ENCODE measurements at regions of chr1 and their contacts with region 1.

Region 1: GRCh38 chr1:225977937-225978748 is 21.0 kb downstream of the SDE2 start:
- DNase-seq: peak in 1 of 4 experiments; percentile 35
- ATAC-seq: peak; percentile 19
- H3K4me3 ChIP-seq: no peak overlapping the region
- H3K27ac ChIP-seq: no peak overlapping the region
- H3K4me1 ChIP-seq: peaks cover 1 to 7% of the 10 kb centered on the region in 2 experiments; a peak in 4 of 5 replicates
- H3K27me3 ChIP-seq: no peaks in the 10 kb centered on the region
- CTCF ChIP-seq: peak in 2 of 3 experiments; percentile 25 to 33; a peak in 1 of 6 replicates
- EP300 ChIP-seq: no peak
- POLR2A ChIP-seq: 0 out of 2 replicates have a peak, but pooled peaks have one; percentile 15
- RAD21 ChIP-seq: peak in 1 of 2 experiments; percentile 39; a peak in 2 of 4 replicates

Region 2: GRCh38 chr1:225318706-225319575 is 659.2 kb before region 1 on chr1:
- CTCF ChIA-PET with region 1: no interaction called
- POLR2A ChIA-PET with region 1: no interaction called
- in situ Hi-C with region 1: no loop called
- intact Hi-C with region 1: loop called (anchors 2 kb)
- DNase-seq: peak; percentile 21 to 60 (median 43)
- ATAC-seq: peak; percentile 98
- H3K4me3 ChIP-seq: no peak overlapping the region
- H3K27ac ChIP-seq: no peak overlapping the region
- H3K4me1 ChIP-seq: no peaks in the 10 kb centered on the region
- H3K27me3 ChIP-seq: peaks cover 3 to 10% of the 10 kb centered on the region in 2 experiments; a peak in 1 of 5 replicates
- CTCF ChIP-seq: peak; percentile 71 to 84 (median 79)
- EP300 ChIP-seq: no peak
- POLR2A ChIP-seq: no peak
- RAD21 ChIP-seq: peak; percentile 55 to 80

Region 3: GRCh38 chr1:225554216-225554812 is 423.8 kb before region 1 on chr1:
- CTCF ChIA-PET with region 1: interaction called, 9 read pairs
- POLR2A ChIA-PET with region 1: no interaction called
- in situ Hi-C with region 1: no loop called
- intact Hi-C with region 1: loop called (anchors 5 kb)
- DNase-seq: peak; percentile 22 to 34 (median 30)
- ATAC-seq: peak; percentile 73; the same call in 2 of the 3 replicates
- H3K4me3 ChIP-seq: no peak overlapping the region
- H3K27ac ChIP-seq: no peak overlapping the region
- H3K4me1 ChIP-seq: no peaks in the 10 kb centered on the region
- H3K27me3 ChIP-seq: peaks cover 11 to 14% of the 10 kb centered on the region in 2 experiments; a peak in 3 of 5 replicates
- CTCF ChIP-seq: peak; percentile 53 to 68 (median 59); a peak in 4 of 6 replicates
- EP300 ChIP-seq: no peak
- POLR2A ChIP-seq: no peak
- RAD21 ChIP-seq: peak; percentile 64 to 76

Region 4: DNA sequence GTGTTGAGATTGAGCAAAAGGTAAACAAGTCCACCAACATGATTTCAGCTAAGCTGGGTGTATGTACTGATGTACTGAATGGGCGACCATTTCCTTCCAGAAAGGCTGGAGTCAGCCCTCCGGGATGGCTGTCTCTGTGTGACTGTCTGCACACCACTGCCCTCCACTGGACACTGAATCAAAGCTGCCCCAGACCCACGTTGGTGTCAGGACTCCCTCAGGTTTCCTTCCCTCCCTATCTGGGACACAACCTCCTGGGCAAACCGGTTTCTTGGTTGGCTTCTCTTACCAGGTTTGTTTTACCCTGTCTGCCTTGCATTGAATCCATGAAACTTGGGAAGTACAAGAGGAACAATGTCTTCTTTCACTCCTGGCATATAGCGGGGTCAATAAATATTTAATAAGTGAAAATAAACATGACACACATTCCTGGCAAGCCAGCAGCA is 205.8 kb before region 1 on chr1:
- CTCF ChIA-PET with region 1: interaction called, 8 read pairs
- POLR2A ChIA-PET with region 1: interaction called, 5 read pairs
- in situ Hi-C with region 1: no loop called
- intact Hi-C with region 1: loop called (anchors 1 kb)
- DNase-seq: peak; percentile 78 to 90 (median 80)
- ATAC-seq: peak; percentile 93
- H3K4me3 ChIP-seq: no peak overlapping the region
- H3K27ac ChIP-seq: no peak overlapping the region
- H3K4me1 ChIP-seq: peaks cover 13 to 23% of the 10 kb centered on the region in 2 experiments
- H3K27me3 ChIP-seq: no peaks in the 10 kb centered on the region
- CTCF ChIP-seq: peak; percentile 92 to 97 (median 95)
- EP300 ChIP-seq: no peak
- POLR2A ChIP-seq: no peak
- RAD21 ChIP-seq: peak; percentile 93 to 97

Region 5: DNA sequence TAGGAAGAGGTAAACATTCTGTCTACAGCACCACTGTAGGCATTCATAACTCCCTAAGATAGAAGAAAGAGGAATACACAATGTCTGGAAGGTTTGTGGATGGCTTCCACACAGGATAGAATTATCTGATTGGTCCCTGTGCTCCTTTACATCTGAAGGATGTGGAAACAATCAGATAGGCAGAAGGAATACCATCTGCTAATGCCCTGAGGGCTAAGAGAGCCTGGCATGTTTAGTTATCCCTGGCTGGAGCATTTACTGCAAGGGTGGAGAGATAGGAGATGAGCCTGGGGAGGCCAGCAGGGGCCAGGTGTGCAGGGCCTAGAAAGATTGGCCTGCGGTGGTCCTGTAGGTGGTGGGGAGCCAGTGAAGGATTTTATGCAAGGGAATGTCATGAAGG is 217.0 kb after region 1 on chr1:
- CTCF ChIA-PET with region 1: no interaction called
- POLR2A ChIA-PET with region 1: no interaction called
- in situ Hi-C with region 1: no loop called
- intact Hi-C with region 1: loop called (anchors 5 kb)
- DNase-seq: no peak
- ATAC-seq: no peak
- H3K4me3 ChIP-seq: no peak overlapping the region
- H3K27ac ChIP-seq: no peak overlapping the region
- H3K4me1 ChIP-seq: peaks cover 3 to 6% of the 10 kb centered on the region in 2 experiments; a peak in 2 of 5 replicates
- H3K27me3 ChIP-seq: no peaks in the 10 kb centered on the region; a peak in 1 of 5 replicates
- CTCF ChIP-seq: no peak
- EP300 ChIP-seq: no peak
- POLR2A ChIP-seq: no peak
- RAD21 ChIP-seq: no peak